ENCODE measurements at regions of chr11 and their contacts with region 1.

Region 1: DNA sequence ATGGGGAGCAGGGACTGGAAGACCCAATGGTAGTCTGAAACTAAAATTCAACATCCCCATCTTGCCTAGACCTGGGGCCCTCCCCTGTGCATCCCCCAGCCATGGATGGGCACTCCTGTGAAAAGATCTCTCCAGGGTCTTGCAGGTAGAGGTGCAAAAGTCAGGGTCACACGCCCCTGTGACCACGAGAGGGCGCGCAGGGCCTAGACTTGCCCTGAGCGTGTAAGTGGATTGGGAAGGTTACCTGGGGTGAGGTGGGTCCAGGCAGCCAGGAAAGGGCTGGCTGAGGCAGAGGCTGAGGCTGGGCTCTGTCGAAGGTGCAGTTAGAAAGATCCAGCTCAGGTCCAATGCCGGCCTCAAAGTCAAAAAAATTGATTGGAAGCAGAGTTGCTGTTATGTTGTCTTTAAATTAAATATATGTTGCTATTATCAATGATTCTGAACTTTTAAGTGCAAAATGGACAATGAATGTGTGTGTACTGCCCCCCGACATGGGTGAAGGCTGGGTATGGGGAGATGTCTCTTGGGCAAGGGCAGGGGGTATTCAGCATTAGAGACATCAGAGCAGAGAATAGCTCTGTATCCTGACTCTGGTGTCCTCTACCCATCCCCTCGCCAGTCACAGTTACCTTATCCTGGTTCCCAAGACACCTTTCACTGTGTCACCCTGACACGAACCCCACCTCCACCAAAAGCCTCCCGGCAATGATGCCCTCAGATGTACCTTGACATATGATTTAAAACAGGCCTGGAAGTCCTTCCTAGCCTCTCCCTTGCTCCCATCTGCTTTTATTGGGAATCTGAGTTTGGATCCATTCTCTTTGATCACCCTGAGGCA is 4.7 kb upstream of the POU2F3 start:
- DNase-seq: no peak
- H3K4me3 ChIP-seq: no peak overlapping the region
- H3K27ac ChIP-seq: no peak overlapping the region
- H3K4me1 ChIP-seq: peaks cover 0 to 8% (median 7%) of the 10 kb centered on the region in 4 donors
- H3K27me3 ChIP-seq: peaks cover 0 to 62% (median 7%) of the 10 kb centered on the region in 4 donors
- CTCF ChIP-seq: peak; percentile 60 to 76 (median 63)
- EP300 ChIP-seq: no peak
- POLR2A ChIP-seq: no peak

Region 2: GRCh38 chr11:120272303-120272702 is 37.1 kb after region 1 on chr11:
- intact Hi-C with region 1: no loop called
- DNase-seq: no peak
- H3K4me3 ChIP-seq: no peak overlapping the region
- H3K27ac ChIP-seq: no peak overlapping the region
- H3K4me1 ChIP-seq: no peaks in the 10 kb centered on the region
- H3K27me3 ChIP-seq: peaks cover 0 to 37% (median 0%) of the 10 kb centered on the region in 4 donors
- CTCF ChIP-seq: no peak
- EP300 ChIP-seq: no peak
- POLR2A ChIP-seq: no peak

Region 3: DNA sequence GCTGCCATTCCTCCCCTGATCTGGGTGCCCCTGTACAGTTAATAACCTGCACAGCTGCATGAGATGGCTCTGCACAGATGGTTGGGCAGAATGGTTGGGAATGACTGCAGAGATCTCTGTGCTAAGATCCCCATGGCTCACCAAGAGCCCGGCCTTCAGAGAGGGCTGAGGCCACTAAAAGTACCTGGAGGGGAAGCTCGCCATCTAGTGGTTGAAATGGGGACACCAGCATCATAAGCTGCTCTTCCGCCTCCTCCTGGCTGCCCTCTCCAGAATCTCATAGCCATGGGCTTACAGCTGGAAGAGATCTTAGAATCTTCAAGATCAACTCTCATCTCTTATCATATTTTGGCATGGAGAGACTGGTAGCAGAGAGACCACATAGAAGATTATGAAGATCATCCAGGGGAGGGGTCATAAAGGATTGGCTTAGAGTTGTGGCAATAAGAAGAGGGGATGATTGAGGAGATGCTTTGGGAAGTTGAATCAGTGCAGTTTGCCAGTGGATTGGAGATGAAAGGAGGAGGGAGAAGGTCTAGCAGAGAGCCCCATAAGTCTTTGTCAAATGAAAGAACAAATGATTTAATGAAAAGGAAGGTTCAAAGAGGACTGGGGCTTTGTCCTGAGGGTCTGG is 67.9 kb after region 1 on chr11:
- intact Hi-C with region 1: loop called (anchors 5 kb)
- DNase-seq: no peak
- H3K4me3 ChIP-seq: no peak overlapping the region
- H3K27ac ChIP-seq: no peak overlapping the region
- H3K4me1 ChIP-seq: peaks cover 0 to 11% (median 6%) of the 10 kb centered on the region in 4 donors
- H3K27me3 ChIP-seq: peaks cover 0 to 24% (median 0%) of the 10 kb centered on the region in 4 donors
- CTCF ChIP-seq: peak; percentile 78 to 89 (median 80)
- EP300 ChIP-seq: no peak
- POLR2A ChIP-seq: no peak

Region 4: DNA sequence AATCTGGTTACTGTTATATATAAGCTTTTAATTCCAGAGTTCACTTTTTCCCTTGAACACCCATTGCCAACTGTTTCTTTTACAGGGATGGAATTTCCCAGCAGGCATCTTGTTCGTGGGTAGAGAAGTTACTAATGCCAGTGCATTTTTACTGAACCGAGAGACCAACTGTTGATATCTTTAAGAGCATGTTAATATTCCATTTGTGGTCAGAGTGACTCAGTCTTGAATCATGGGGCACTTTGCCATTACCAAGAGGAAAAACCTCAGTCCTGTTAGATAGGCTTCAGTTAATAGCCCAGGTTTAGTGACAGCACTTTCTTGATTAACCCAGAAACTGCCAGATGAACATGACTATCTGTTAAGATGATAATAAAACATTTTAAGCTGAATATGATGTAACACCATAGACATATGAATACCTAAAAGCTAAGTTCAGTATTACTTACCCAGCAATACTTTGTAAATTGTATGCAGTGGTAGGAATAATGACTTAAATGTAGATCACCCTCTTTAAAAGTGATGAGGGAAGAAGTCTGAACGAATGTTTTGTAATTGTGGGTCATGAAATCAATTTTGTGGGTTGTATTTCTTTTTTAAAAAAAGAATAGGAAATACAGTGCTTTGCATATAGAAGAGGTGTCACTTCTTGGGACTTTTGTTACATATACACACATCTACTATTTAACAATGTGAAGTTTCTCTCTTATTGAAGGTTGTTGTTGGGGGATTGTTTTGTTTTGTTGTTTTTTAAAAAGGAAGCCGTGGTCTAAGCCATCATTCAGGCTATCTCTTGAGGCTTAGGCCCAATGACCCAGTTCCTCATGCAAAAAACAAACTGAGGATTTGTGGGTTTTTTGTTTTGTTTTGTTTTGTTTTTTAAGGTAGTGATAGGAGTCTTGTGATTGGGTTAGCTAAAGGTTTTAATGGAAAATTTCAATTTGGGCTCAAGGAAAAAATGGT is 197.1 kb after region 1 on chr11:
- intact Hi-C with region 1: no loop called
- DNase-seq: no peak
- H3K4me3 ChIP-seq: peak overlapping the region in 1 of 4 donors; percentile 2
- H3K27ac ChIP-seq: peak overlapping the region; percentile 56 to 72 (median 64)
- H3K4me1 ChIP-seq: peaks cover 13 to 19% (median 18%) of the 10 kb centered on the region in 4 donors
- H3K27me3 ChIP-seq: no peaks in the 10 kb centered on the region
- CTCF ChIP-seq: no peak
- EP300 ChIP-seq: no peak
- POLR2A ChIP-seq: no peak

Measured in esophagus muscularis mucosa (tissue), 4 donors.